WTC11 (cell line): ENCODE measurements at regions of chr1 and their contacts with region 1.

Region 1: DNA sequence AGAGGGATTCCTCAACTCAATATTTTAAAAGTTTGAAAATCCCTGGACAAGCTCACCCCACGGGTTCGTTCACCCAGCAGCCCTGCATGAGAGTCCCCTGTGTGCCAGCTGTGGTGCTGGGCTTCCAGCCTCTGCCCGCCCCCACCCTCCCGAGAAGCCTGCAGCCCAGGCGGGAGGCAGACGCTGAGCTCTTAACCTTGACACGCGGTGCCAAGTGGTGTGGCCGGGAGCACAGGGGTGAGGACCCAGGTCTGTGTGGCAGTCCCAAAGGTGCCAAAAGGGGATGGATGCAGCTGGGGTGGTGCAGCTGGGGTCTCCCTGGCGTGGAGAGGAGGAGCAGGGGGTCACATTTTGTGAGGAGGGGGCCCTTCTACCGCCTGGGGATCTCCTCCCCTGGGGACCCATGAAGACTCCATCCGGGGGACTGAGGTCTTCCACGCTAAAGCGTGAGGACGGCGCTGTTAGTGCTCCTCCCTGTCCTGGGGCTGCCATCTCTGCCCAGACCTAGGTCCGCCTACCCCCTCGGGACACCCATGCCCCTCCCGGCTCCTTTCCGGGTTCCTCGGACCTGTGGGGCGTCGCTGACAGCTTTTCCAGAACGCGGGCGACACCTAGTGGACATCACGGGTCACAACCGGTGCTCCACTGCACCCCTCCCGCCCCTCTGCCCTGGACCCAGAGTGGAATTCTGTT is 12.9 kb downstream of the PLA2G2F start:
- DNase-seq: peak; percentile 90
- ATAC-seq: peak; percentile 91
- H3K4me3 Mint-ChIP-seq: peak overlapping the region; percentile 42
- H3K27ac Mint-ChIP-seq: no peak overlapping the region
- H3K4me1 Mint-ChIP-seq: peaks cover 28% of the 10 kb centered on the region
- H3K27me3 Mint-ChIP-seq: no peaks in the 10 kb centered on the region
- CTCF ChIP-seq: peak; percentile 88

Region 2: GRCh38 chr1:19918057-19918456 is 234.0 kb before region 1 on chr1:
- CTCF ChIA-PET with region 1: interaction called, 52 read pairs
- POLR2A ChIA-PET with region 1: no interaction called
- DNase-seq: peak; percentile 88
- ATAC-seq: peak; percentile 70
- H3K4me3 Mint-ChIP-seq: no peak overlapping the region
- H3K27ac Mint-ChIP-seq: no peak overlapping the region
- H3K4me1 Mint-ChIP-seq: peaks cover 9% of the 10 kb centered on the region; the same call in 1 of the 2 replicates
- H3K27me3 Mint-ChIP-seq: no peaks in the 10 kb centered on the region; the same call in 1 of the 2 replicates
- CTCF ChIP-seq: peak; percentile 79

Region 3: GRCh38 chr1:19974822-19975416 is 177.1 kb before region 1 on chr1:
- CTCF ChIA-PET with region 1: interaction called, 75 read pairs
- POLR2A ChIA-PET with region 1: no interaction called
- DNase-seq: peak; percentile 66
- ATAC-seq: peak; percentile 93
- H3K4me3 Mint-ChIP-seq: no peak overlapping the region
- H3K27ac Mint-ChIP-seq: no peak overlapping the region
- H3K4me1 Mint-ChIP-seq: peaks cover 28% of the 10 kb centered on the region
- H3K27me3 Mint-ChIP-seq: no peaks in the 10 kb centered on the region; the same call in 1 of the 2 replicates
- CTCF ChIP-seq: peak; percentile 47; the same call in 1 of the 2 replicates

Region 4: DNA sequence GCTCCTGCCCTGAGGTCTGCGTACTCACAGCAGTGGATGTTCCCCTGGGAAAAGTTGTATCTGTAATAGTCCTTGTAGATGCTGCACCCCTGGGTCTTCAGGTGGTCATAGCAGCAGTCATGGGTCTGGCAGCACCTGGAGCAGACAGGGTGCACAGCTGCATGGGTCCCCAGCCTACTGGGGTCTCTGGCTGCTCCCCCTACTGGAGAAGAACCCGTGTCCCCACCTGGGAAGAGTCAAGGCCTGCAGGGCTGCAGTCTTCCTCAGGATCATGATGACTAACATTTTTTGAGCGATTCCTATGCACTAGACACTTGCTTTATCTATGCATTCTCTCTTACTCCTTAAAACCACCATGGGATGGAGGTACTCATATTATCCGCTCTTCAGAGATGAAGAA is 36.6 kb before region 1 on chr1:
- CTCF ChIA-PET with region 1: interaction called, 22 read pairs
- POLR2A ChIA-PET with region 1: no interaction called
- DNase-seq: peak; percentile 35
- ATAC-seq: peak; percentile 58
- H3K4me3 Mint-ChIP-seq: no peak overlapping the region
- H3K27ac Mint-ChIP-seq: no peak overlapping the region
- H3K4me1 Mint-ChIP-seq: peaks cover 16% of the 10 kb centered on the region
- H3K27me3 Mint-ChIP-seq: no peaks in the 10 kb centered on the region
- CTCF ChIP-seq: no peak

Region 5: GRCh38 chr1:20137043-20137442 is 15.0 kb before region 1 on chr1:
- CTCF ChIA-PET with region 1: no interaction called
- POLR2A ChIA-PET with region 1: no interaction called
- DNase-seq: no peak
- ATAC-seq: no peak
- H3K4me3 Mint-ChIP-seq: no peak overlapping the region
- H3K27ac Mint-ChIP-seq: no peak overlapping the region
- H3K4me1 Mint-ChIP-seq: no peaks in the 10 kb centered on the region
- H3K27me3 Mint-ChIP-seq: 0 out of 2 replicates have a peak, but pooled peaks cover 3% of the 10 kb centered on the region
- CTCF ChIP-seq: no peak

Region 6: GRCh38 chr1:20194757-20195461 is 42.9 kb after region 1 on chr1:
- CTCF ChIA-PET with region 1: interaction called, 10 read pairs
- POLR2A ChIA-PET with region 1: interaction called, 3 read pairs
- DNase-seq: peak; percentile 78
- ATAC-seq: peak; percentile 87
- H3K4me3 Mint-ChIP-seq: no peak overlapping the region
- H3K27ac Mint-ChIP-seq: no peak overlapping the region
- H3K4me1 Mint-ChIP-seq: peaks cover 24% of the 10 kb centered on the region
- H3K27me3 Mint-ChIP-seq: peaks cover 13% of the 10 kb centered on the region
- CTCF ChIP-seq: peak; percentile 81